ENCODE measurements at regions of chr7 and their contacts with region 1.

Region 1: DNA sequence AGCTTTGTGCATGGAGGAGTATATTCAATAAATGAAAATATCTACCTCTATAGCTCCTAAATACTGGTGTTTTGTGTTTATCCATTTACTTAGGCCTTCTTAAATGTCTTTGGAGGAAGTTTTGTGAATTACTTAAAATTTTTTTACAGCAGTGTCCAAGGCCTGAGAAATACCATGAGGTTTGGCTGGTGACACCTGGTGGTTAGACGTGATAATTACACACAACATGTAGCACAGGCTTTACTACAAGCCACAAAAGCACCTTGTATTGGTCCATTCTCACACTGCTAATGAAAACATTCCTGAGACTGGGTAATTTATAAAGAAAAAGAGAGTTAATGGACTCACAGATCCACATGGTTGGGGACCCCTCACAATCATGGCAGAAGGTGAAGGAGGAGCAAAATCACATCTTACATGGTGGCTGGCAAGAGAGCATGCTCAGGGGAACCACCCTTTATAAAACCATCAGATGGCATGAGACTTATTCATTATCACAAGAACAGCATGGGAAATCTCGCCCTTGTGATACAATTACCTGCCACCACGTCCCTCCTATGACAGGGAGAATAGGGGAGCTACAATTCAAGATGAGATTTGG is 20.6 kb downstream of the HYAL4 start:
- DNase-seq: peak; percentile 61
- ATAC-seq: peak; percentile 85
- H3K4me3 Mint-ChIP-seq: no peak overlapping the region
- H3K27ac Mint-ChIP-seq: no peak overlapping the region
- H3K4me1 Mint-ChIP-seq: no peaks in the 10 kb centered on the region
- H3K27me3 Mint-ChIP-seq: peaks cover 11% of the 10 kb centered on the region

Region 2: DNA sequence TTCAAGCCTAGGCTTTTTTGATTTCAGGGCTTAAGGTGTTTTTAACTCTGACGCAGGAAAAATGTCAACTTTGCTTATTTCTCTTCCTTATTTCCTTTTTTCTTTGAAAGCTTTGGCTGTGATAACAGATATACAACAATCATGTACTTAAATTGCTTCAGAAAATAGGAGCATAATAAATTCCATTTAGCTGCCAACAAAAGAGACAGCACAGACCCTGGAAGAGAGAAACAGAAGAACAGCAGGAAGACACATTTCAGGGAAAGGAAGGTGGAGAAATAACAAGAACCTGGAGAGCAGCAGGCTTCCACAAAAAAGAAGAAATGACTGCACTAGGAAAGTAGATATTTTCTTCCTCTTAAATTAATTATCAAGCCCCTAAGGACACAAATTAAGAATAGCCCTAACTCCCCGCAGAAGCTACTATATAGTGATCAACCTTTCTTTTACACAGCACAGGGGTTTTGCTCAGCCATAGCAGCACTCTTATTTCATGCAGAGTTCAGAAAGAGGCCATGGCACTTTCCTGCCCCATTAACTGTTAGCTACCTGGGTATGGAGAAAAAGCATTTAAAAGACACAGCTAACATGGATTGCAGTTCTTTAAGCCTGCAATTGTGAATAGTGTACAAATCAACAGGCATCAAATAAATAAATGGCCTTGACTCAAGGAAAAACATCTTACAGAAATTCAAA is 392.7 kb before region 1 on chr7:
- CTCF ChIA-PET with region 1: no interaction called
- POLR2A ChIA-PET with region 1: no interaction called
- intact Hi-C with region 1: no loop called
- DNase-seq: no peak
- ATAC-seq: no peak
- H3K4me3 Mint-ChIP-seq: no peak overlapping the region
- H3K27ac Mint-ChIP-seq: no peak overlapping the region
- H3K4me1 Mint-ChIP-seq: no peaks in the 10 kb centered on the region
- H3K27me3 Mint-ChIP-seq: peaks cover 8% of the 10 kb centered on the region

Region 3: DNA sequence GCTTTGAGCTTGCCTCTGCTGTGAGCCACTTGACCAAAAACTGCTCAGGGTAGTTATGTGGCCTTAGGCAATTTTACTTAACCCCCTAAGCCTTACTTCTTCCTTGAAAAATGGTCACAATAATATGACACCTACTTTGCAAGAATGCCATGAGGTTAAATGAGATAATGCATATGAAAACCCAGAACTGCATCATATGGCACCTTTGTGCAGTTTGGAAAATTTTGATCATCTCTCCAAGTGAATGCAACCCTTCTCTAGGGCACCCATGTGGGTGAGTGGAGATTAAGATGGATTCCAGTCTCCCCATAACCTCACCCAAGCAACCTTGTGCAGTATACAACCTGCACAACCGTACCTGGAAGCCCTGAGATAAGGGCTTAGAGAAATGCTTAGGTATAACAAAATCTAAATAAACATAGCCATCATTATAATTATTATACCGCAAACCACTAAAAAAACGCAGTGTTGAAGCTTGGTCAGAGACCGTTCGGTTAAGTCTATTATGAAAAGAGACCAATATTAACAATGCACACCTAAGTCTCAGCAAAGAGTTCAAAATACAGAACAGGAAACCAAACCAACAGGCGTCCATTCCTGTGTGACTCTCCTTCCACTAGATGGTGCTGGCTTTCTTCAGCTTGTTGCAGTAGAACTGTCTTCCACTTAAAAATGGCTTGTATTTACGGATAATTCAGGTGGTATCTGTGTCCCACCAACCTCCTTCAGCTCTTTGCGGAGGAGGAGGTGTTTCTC is 285.0 kb before region 1 on chr7:
- CTCF ChIA-PET with region 1: no interaction called
- POLR2A ChIA-PET with region 1: no interaction called
- intact Hi-C with region 1: loop called in 1 of 2 experiments (anchors 2 kb)
- DNase-seq: no peak
- ATAC-seq: peak; percentile 66
- H3K4me3 Mint-ChIP-seq: no peak overlapping the region
- H3K27ac Mint-ChIP-seq: no peak overlapping the region
- H3K4me1 Mint-ChIP-seq: no peaks in the 10 kb centered on the region
- H3K27me3 Mint-ChIP-seq: peaks cover 17% of the 10 kb centered on the region

Region 4: DNA sequence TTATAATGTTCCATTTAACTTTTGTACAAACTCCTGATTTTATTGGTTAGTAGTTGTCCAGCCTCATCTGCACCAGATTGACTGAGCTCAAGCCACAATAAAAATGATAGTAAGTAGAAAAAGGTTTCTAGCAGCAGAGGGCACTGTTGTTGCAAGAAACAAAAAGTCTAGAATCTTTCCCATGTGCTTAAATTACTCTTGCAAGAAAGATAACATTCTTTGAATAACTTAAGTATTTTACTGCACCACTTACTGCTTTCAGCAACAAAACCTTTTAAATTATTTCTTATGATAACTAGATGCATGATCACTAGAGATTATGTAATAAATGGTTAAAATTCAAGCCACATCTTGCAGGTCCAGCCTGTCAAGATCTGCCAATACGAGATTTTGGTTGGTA is 182.9 kb before region 1 on chr7:
- CTCF ChIA-PET with region 1: interaction called, 6 read pairs
- POLR2A ChIA-PET with region 1: no interaction called
- intact Hi-C with region 1: loop called (anchors 1 kb)
- DNase-seq: peak; percentile 11
- ATAC-seq: no peak
- H3K4me3 Mint-ChIP-seq: no peak overlapping the region
- H3K27ac Mint-ChIP-seq: no peak overlapping the region
- H3K4me1 Mint-ChIP-seq: no peaks in the 10 kb centered on the region
- H3K27me3 Mint-ChIP-seq: no peaks in the 10 kb centered on the region

Region 5: DNA sequence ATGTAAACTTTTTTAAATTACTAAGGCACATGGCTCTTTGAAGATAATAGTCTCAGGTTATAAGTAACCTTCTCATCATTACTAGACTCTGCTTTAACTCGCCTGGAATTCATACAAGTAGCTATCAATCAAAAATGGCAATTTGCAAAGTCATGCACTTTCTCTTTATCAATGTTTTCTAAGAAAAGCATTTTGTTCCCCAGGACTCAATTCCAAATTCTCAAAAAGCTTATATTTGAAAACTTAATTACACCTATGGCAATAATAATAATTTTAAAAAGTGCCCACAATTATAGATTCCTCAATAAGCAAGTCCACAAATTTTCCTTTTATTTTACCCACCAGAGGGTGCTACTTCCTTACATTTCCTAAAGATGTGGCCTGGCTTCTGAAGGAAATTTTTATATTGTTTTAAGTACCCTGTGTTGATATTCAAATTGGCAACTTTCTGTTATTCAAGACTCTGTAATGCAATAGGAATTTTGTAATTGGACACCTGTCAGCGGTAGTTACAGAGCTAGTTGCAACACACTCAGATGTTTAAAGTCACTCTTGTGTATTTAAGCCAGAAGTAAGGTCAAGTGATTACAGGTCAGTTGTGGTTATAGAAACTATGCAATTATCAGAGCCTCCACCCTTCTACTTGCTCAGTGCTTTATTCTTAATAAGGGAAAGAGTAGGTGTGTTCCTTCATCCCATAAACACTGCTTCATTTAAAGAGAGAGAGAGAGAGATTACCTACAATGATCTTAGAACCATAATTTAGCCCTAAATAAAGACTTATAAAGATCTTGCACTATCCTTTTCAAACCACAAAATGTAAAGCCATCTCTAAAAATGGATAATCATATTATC is 67.7 kb before region 1 on chr7:
- CTCF ChIA-PET with region 1: interaction called, 71 read pairs
- POLR2A ChIA-PET with region 1: no interaction called
- intact Hi-C with region 1: loop called (anchors 1 kb)
- DNase-seq: no peak
- ATAC-seq: peak; percentile 42
- H3K4me3 Mint-ChIP-seq: no peak overlapping the region
- H3K27ac Mint-ChIP-seq: no peak overlapping the region
- H3K4me1 Mint-ChIP-seq: peaks cover 3% of the 10 kb centered on the region
- H3K27me3 Mint-ChIP-seq: peaks cover 4% of the 10 kb centered on the region

Region 6: DNA sequence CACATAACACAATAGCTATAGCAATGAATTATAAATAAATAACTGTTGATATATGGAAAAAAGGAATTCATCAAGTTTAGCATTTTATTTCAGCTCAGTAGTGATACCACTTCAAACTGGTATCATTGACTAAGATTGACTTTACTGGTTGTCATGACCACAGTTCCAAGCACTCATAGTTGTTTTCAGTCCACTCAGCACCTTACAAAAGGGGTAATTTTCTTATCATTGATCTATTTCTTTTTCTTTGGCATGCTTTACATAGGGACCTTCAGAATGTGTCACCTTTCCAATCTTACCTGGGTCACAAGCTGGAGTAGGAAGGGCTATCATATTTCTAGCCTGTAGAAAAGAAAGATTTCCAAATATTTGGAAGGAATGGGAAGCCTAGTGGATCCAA is 442.8 kb after region 1 on chr7:
- CTCF ChIA-PET with region 1: no interaction called
- POLR2A ChIA-PET with region 1: no interaction called
- intact Hi-C with region 1: no loop called
- DNase-seq: no peak
- ATAC-seq: no peak
- H3K4me3 Mint-ChIP-seq: no peak overlapping the region
- H3K27ac Mint-ChIP-seq: no peak overlapping the region
- H3K4me1 Mint-ChIP-seq: no peaks in the 10 kb centered on the region
- H3K27me3 Mint-ChIP-seq: no peaks in the 10 kb centered on the region

Region 7: DNA sequence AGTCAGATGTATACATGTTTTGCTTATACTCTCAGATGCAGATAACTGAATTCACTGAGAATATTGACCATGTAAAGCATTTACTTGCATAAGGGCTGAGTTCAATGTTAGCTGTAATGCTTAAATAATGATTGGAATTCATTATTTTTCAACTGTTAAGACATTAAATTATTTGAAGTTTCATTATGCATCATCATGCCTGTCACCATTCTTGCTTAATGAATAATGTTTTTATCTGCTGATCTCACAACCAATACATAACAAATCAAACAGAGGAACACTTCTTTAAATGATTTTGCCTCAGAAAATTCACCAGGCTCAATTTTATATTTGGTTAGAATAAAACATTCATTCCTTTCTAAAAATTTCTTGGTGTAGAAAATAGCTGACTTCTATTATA is 666.5 kb after region 1 on chr7:
- CTCF ChIA-PET with region 1: no interaction called
- POLR2A ChIA-PET with region 1: no interaction called
- intact Hi-C with region 1: no loop called
- DNase-seq: no peak
- ATAC-seq: no peak
- H3K4me3 Mint-ChIP-seq: no peak overlapping the region
- H3K27ac Mint-ChIP-seq: no peak overlapping the region
- H3K4me1 Mint-ChIP-seq: no peaks in the 10 kb centered on the region
- H3K27me3 Mint-ChIP-seq: no peaks in the 10 kb centered on the region